OCI-LY7 (cell line): ENCODE measurements at regions of chr2 and their contacts with region 1.

Region 1: GRCh38 chr2:196200557-196200956 is 29.2 kb upstream of the STK17B start:
- DNase-seq: peak; percentile 45
- H3K4me3 ChIP-seq: peak overlapping the region; percentile 42
- H3K27ac ChIP-seq: no peak overlapping the region
- H3K4me1 ChIP-seq: peaks cover 46% of the 10 kb centered on the region
- CTCF ChIP-seq: no peak

Region 2: DNA sequence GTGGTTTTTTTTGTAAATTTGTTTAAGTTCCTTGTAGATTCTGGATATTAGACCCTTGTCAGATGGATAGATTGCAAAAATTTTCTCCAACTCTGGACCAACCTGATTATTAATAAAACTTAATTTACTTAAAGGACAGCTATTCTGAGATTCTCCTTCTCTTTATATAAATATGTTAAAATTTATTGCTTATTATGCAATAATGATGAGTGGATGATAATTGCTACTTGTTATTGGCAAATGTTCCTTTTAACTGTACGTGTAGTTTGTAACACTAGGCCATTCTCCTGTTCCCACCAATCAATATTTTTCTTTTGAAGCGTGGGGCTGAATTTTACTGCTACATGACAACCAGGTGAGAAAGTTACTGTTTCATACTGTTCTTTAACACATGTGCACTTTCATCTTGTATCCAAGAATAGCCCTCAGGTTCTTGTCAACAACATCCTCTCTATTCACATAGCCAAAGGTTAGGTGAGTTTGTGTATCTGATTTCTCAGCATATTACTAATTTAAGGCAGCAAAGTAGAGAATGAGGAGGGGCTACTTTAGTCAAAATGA is 12.6 kb before region 1 on chr2:
- CTCF ChIA-PET with region 1: interaction called, 3 read pairs
- POLR2A ChIA-PET with region 1: interaction called, 43 read pairs
- intact Hi-C with region 1: no loop called
- DNase-seq: peak; percentile 74
- H3K4me3 ChIP-seq: peak overlapping the region; percentile 8
- H3K27ac ChIP-seq: peak overlapping the region; percentile 64
- H3K4me1 ChIP-seq: peaks cover 69% of the 10 kb centered on the region
- CTCF ChIP-seq: no peak

Region 3: DNA sequence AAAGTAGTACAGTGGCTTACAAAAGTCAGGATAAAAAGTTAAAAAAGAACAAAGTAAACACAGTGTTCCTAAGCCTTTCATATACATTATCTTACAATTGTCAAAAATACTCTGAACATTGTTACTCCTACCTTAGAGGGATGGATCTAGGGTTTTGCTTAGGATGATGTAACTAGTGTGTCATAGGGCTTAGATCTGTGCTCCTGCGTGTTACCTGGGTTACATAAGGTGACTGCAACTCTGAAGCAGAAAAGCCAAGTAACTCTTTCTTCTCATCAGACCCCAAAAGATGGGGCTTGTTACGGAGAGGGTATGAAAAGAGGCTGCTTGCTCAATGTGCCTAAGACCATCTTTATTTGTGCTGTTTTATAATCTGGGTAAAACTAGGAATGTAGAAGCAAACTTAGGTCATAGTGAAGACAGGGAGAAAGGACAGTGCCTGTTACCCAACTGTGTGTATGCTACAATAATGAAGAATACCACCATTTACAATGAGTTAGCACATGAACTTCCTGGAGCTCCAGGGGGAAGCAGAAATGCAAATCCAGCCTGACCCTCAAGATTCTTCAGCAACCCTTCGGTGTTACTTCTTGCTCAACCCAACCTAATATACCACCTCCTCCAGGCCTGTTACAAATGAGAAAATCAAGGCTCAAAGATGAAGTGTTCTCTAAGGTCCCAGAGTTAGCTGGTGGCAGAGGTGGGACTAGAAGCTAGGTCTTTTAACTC is 12.9 kb after region 1 on chr2:
- CTCF ChIA-PET with region 1: no interaction called
- POLR2A ChIA-PET with region 1: interaction called, 26 read pairs
- intact Hi-C with region 1: no loop called
- DNase-seq: peak; percentile 30
- H3K4me3 ChIP-seq: no peak overlapping the region
- H3K27ac ChIP-seq: no peak overlapping the region
- H3K4me1 ChIP-seq: peaks cover 50% of the 10 kb centered on the region
- CTCF ChIP-seq: no peak

Region 4: GRCh38 chr2:196225213-196225612 is 24.7 kb after region 1 on chr2:
- CTCF ChIA-PET with region 1: interaction called, 4 read pairs
- POLR2A ChIA-PET with region 1: interaction called, 10 read pairs
- intact Hi-C with region 1: no loop called
- DNase-seq: no peak
- H3K4me3 ChIP-seq: no peak overlapping the region
- H3K27ac ChIP-seq: no peak overlapping the region
- H3K4me1 ChIP-seq: peaks cover 23% of the 10 kb centered on the region
- CTCF ChIP-seq: no peak

Region 5: GRCh38 chr2:196263181-196263747 is 62.7 kb after region 1 on chr2:
- CTCF ChIA-PET with region 1: no interaction called
- POLR2A ChIA-PET with region 1: interaction called, 11 read pairs
- intact Hi-C with region 1: no loop called
- DNase-seq: peak; percentile 72
- H3K4me3 ChIP-seq: peak overlapping the region; percentile 39
- H3K27ac ChIP-seq: peak overlapping the region; percentile 65
- H3K4me1 ChIP-seq: peaks cover 70% of the 10 kb centered on the region
- CTCF ChIP-seq: no peak

Region 6: DNA sequence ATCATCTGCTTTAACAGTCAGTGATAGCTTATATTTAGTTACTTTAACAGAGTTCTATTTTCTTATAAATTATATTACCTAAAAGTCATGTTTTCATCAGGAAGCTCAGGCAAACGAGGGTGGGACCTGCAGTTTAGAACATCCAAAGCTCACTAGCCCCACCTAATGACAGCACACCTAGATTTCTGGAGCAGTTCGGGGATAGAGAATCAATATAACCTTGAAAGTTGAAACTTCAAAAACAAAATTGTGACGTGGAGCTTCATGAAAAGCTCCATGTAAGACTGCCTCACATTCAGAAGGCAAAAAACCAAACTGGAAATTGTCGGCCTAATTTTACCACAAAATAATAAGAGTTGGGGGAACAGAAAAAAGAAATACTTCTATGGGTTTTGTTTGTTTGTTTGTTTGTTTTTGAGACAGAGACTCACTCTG is 253.1 kb after region 1 on chr2:
- CTCF ChIA-PET with region 1: no interaction called
- POLR2A ChIA-PET with region 1: no interaction called
- intact Hi-C with region 1: no loop called
- DNase-seq: peak; percentile 47
- H3K4me3 ChIP-seq: no peak overlapping the region
- H3K27ac ChIP-seq: no peak overlapping the region
- H3K4me1 ChIP-seq: no peaks in the 10 kb centered on the region
- CTCF ChIP-seq: peak; percentile 85

Region 7: DNA sequence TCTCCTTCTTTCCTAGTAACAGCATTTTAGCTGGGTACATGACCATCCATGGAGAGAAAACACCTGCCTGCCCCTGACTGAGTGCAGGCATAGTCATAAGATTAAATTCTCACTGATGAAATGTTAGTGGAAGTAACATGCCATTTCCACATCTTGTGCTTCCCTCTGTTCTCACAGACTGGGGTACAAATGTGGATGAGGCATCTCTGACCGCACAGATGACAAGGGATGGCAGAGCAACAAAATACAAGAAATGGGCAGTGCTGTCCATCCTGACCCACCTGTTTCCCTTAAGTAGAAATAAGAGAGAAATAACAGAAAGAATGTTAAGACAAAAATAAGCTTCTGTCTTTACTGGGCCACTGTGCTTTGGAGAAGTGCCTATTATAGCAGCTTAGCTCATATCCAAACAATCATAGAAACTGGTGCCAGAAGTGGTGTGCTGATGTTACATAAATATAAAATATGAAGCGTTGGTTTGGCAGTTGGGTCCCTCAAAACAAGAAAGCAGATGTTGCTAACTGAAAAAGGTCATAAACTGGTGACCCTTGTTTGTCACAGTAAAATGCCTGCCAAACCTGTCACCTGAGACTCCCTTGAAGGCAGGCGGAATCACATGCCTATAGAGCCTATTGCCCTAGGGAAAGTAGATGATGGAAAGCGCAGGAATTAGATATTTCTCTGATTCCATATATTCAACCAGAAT is 366.6 kb after region 1 on chr2:
- CTCF ChIA-PET with region 1: no interaction called
- POLR2A ChIA-PET with region 1: no interaction called
- intact Hi-C with region 1: no loop called
- DNase-seq: no peak
- H3K4me3 ChIP-seq: no peak overlapping the region
- H3K27ac ChIP-seq: no peak overlapping the region
- H3K4me1 ChIP-seq: no peaks in the 10 kb centered on the region
- CTCF ChIP-seq: no peak